ENCODE measurements at regions of chr11 and their contacts with region 1.

Region 1: GRCh38 chr11:62787005-62787759 is at the start of gene TMEM179B:
- DNase-seq: peak; percentile 96 to 99 (median 99)
- ATAC-seq: peak; percentile 81 to 90 (median 89)
- H3K4me3 ChIP-seq: peak within 1 kb of the TSS; percentile 83 to 100 (median 92)
- H3K27ac ChIP-seq: peak within 1 kb of the TSS; percentile 88 to 100 (median 98)
- H3K4me1 ChIP-seq: peaks cover 6 to 54% (median 43%) of the 10 kb centered on the region in 12 donors
- H3K27me3 ChIP-seq: no peaks in the 10 kb centered on the region
- CTCF ChIP-seq: peak in 6 of 12 donors; percentile 28 to 60 (median 46)
- POLR2A ChIP-seq: peak; percentile 81 to 97
- total RNA-seq, gene TMEM179B: 14.7 to 46.0 (median 19.4) TPM

Region 2: DNA sequence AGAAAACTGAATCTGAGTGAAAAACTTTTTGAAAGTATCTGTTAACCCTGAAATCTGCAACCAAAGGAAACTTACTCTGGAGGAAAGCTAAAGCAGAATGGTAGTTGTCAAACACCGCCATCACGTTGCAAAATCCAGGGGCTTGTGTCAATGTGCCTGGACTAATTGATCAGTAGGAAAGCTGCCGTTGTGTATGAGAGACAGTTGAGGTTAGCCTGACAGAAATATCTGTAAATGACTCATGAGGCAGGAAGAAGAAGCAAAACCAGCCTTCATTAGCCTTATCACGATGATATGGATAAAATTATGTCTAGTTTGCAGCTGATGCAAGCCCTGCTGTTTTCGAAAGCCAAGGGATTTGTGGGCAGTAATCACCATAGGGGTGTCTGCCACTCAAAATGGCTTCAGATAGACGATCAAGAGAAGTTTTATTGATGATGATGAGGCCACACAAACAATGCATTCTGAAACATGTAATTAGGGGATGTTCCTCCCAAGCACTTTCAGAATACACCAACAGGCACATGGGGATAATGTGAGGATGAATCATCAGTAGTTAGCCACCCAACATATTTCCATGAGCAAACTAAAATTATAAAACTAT is 359.4 kb before region 1 on chr11:
- intact Hi-C with region 1: no loop called
- DNase-seq: no peak
- ATAC-seq: no peak
- H3K4me3 ChIP-seq: no peak overlapping the region
- H3K27ac ChIP-seq: peak overlapping the region in 2 of 12 donors; percentile 78 to 84
- H3K4me1 ChIP-seq: peaks cover 0 to 62% (median 3%) of the 10 kb centered on the region in 12 donors
- H3K27me3 ChIP-seq: no peaks in the 10 kb centered on the region
- CTCF ChIP-seq: no peak
- POLR2A ChIP-seq: no peak

Region 3: DNA sequence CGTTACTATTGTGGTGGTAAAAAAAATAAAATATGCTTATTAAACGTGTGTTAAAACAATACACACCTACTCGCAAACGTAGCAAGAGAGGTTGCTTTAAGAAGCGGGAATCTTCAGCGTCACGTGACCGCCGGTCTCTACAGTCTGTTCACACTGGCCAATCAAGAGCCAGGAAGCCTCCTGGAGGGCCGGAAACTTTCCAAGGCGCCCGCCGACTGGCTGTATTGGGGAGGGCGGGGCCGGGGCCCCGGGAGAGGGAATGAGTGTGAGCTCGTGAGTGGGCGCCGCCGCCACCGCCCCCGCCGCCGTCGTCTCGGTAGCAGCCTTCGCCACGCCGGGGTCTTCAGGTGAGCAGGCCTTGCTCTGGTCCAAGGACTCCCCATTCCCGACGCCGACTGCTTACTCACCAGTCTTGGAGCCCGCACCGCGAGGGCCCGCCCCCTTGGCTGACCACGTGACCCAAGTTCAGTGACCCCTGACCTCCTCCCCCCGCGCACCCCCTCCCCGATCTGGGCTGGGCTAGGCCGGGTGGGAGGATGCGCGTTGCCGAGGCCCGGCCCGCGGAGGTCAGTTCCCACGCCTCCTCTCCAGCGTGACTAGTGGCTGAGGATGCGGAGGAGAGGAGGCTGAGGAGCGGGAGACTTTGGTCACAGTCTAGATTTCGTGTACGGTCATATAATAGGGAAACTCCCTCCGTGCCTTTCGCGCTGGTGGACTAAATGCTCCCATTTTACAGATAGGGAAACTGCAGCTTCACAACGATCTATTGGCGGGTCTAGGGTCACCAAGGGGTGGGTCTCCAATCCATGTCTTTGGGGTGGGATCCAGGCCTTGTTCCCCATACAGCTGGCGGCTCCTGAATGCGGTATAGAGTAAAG is 15.8 kb before region 1 on chr11 and contains the start of gene TAF6L:
- intact Hi-C with region 1: loop called in 1 of 10 experiments (anchors 2 kb)
- DNase-seq: peak; percentile 98 to 100 (median 99)
- ATAC-seq: peak; percentile 94 to 98 (median 98)
- H3K4me3 ChIP-seq: peak within 1 kb of the TSS; percentile 52 to 86 (median 74)
- H3K27ac ChIP-seq: peak within 1 kb of the TSS; percentile 84 to 96 (median 93)
- H3K4me1 ChIP-seq: peaks cover 0 to 27% (median 19%) of the 10 kb centered on the region in 12 donors
- H3K27me3 ChIP-seq: no peaks in the 10 kb centered on the region
- CTCF ChIP-seq: no peak
- POLR2A ChIP-seq: peak in 1 of 2 donors; percentile 27
- total RNA-seq, gene TAF6L: 7.1 to 19.5 (median 9.3) TPM

Region 4: DNA sequence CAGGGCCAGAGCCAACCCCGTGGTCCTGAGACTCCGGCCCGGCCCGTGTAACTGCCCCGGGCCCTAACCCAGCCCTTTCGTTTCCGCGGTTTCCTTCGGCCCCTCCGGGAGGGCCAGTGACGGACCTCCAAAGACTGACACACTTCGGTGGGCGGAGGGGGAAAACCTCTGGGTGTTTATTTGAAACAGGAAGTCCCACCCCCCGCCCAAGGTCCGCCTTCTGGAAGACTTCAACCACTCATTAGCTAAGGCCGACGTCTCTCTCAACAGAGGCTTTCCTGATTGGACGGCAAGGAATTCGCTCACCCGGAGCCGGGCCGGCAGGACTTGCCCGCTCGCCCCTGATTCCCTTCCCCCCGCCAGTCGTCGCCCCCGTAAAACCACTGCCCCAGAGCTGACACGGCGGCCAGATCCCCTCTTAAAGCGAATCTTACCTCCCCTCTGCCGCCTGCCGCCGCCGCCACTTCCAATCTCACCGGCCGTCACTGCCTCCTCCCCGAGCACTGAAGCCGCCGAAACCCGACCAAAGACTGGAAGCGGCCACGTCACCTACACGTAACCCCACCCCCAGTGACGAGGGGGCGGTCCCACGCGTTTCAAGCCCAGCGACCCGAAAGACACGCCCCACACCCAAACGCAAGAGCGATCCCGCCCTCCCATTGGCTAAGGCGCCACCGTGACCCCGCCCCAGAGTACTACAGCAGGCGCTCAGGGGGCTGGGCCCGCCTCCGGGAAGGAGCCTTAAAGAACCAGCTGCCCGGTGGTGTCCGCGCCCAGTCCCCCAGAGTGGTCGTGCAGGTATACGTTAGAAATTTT is 44.5 kb after region 1 on chr11 and contains the start of gene STX5:
- intact Hi-C with region 1: loop called in 7 of 10 experiments (anchors 2 to 5 kb)
- DNase-seq: peak; percentile 99 to 100 (median 100)
- ATAC-seq: peak; percentile 97 to 99 (median 98)
- H3K4me3 ChIP-seq: peak within 1 kb of the TSS; percentile 53 to 99 (median 93)
- H3K27ac ChIP-seq: peak within 1 kb of the TSS; percentile 87 to 98 (median 95)
- H3K4me1 ChIP-seq: peaks cover 10 to 42% (median 29%) of the 10 kb centered on the region in 12 donors
- H3K27me3 ChIP-seq: no peaks in the 10 kb centered on the region
- CTCF ChIP-seq: no peak
- POLR2A ChIP-seq: peak; percentile 12 to 87
- total RNA-seq, gene STX5: 16.2 to 26.8 (median 18.9) TPM

Region 5: DNA sequence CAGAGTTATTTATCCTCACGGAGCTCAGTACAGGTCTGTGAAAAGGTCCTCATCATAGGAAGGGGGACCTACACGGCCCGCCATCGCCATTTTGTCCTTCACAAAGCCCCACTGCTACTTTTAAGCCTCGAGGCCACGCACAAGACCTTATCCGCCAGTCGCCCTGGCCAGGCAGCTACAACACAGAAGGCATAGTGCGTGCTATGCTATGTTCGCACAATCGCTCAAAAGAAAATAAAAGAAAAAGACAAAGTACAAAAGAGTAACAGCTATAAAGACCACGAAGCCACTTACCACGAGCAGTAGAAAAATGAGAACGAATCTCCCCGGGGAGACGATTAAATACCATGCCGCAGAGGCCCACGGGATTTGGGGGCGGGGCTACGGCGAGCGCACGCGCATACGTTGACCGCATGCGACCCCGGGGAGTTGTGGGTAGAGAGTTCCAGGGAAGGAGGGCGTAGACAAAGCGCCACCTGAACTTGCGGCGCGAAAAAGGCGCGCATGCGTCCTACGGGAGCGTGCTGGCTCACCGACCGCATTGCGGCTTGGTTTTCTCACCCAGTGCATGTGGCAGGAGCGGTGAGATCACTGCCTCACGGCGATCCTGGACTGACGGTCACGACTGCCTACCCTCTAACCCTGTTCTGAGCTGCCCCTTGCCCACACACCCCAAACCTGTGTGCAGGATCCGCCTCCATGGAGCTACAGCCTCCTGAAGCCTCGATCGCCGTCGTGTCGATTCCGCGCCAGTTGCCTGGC is 68.6 kb after region 1 on chr11:
- intact Hi-C with region 1: loop called in 6 of 10 experiments (anchors 2 to 5 kb)
- DNase-seq: peak; percentile 96 to 97 (median 96)
- ATAC-seq: peak; percentile 98 to 99 (median 98)
- H3K4me3 ChIP-seq: peak overlapping the region; percentile 61 to 94 (median 76)
- H3K27ac ChIP-seq: peak overlapping the region; percentile 38 to 88 (median 80)
- H3K4me1 ChIP-seq: peaks cover 5 to 54% (median 25%) of the 10 kb centered on the region in 12 donors
- H3K27me3 ChIP-seq: no peaks in the 10 kb centered on the region
- CTCF ChIP-seq: peak in 1 of 12 donors; percentile 18
- POLR2A ChIP-seq: peak; percentile 79 to 97

Region 6: GRCh38 chr11:62880803-62881578 is 93.8 kb after region 1 on chr11 and contains the start of gene SLC3A2:
- intact Hi-C with region 1: loop called in 1 of 10 experiments (anchors 5 kb)
- DNase-seq: peak; percentile 88 to 93 (median 90)
- ATAC-seq: peak; percentile 90 to 94 (median 92)
- H3K4me3 ChIP-seq: peak within 1 kb of the TSS; percentile 80 to 100 (median 96)
- H3K27ac ChIP-seq: peak within 1 kb of the TSS; percentile 93 to 100 (median 99)
- H3K4me1 ChIP-seq: peaks cover 13 to 53% (median 40%) of the 10 kb centered on the region in 12 donors
- H3K27me3 ChIP-seq: no peaks in the 10 kb centered on the region
- CTCF ChIP-seq: peak; percentile 49 to 93 (median 80)
- POLR2A ChIP-seq: peak; percentile 95 to 98
- total RNA-seq, gene SLC3A2: 26.6 to 76.0 (median 59.1) TPM